ENCODE measurements at regions of chr11 and their contacts with region 1.

Region 1: DNA sequence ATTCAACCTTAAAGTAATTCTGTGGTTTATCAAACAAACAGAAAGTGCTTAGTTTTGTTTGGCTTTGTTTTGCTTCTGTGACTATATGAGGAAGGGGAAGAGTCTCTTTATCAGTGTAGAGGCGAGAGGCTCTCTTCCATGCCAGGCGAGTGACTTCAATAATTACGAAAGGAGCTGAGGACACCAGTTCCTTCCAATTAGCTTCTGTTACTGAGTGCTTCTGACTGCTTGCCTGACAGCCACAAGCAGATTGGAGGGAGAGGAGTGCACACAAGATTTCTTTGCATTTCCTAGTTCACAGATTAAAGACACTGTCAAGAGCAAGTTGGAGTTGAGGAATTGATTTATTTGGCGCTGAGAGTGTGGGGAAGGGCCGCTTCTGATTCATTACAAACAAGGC is 1484.5 kb upstream of the TENM4 start:
- DNase-seq: no peak
- H3K4me3 ChIP-seq: no peak overlapping the region
- H3K27ac ChIP-seq: no peak overlapping the region
- H3K4me1 ChIP-seq: no peaks in the 10 kb centered on the region
- H3K27me3 ChIP-seq: no peaks in the 10 kb centered on the region
- CTCF ChIP-seq: no peak
- EP300 ChIP-seq: no peak
- POLR2A ChIP-seq: no peak
- RAD21 ChIP-seq: no peak

Region 2: GRCh38 chr11:80937842-80938241 is 12.5 kb after region 1 on chr11:
- CTCF ChIA-PET with region 1: interaction called, 11 read pairs
- POLR2A ChIA-PET with region 1: no interaction called
- DNase-seq: no peak
- H3K4me3 ChIP-seq: no peak overlapping the region
- H3K27ac ChIP-seq: no peak overlapping the region
- H3K4me1 ChIP-seq: no peaks in the 10 kb centered on the region
- H3K27me3 ChIP-seq: peaks cover 0 to 1% (median 0%) of the 10 kb centered on the region in 4 experiments; a peak in 1 of 7 replicates
- CTCF ChIP-seq: no peak
- EP300 ChIP-seq: no peak
- POLR2A ChIP-seq: no peak
- RAD21 ChIP-seq: no peak